ENCODE measurements at regions of chr1 and their contacts with region 1.

Region 1: GRCh38 chr1:100778748-100779147 is 59.2 kb downstream of the VCAM1 start:
- DNase-seq: no peak
- H3K4me3 ChIP-seq: no peak overlapping the region
- CTCF ChIP-seq: no peak

Region 2: DNA sequence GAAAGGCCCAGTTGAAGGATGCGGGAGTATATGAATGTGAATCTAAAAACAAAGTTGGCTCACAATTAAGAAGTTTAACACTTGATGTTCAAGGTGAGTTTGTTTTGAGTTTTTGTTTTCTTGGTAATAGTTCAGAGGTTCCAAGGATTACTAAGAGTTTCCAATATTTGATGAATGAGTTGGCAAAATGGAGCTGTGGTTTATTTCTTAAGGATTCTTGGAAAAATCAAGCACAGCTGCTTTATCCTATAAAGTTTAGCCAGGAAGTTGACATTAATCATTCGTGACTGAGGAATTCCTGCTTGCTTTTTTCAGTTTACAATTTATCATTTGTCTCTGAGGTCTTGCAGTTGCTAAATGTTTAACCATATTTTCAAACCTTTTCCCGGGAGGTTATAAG is 44.1 kb before region 1 on chr1:
- in situ Hi-C with region 1: no loop called
- DNase-seq: peak; percentile 51
- H3K4me3 ChIP-seq: no peak overlapping the region
- CTCF ChIP-seq: no peak

Region 3: GRCh38 chr1:100847361-100848082 is 68.8 kb after region 1 on chr1:
- in situ Hi-C with region 1: loop called (anchors 5 kb)
- DNase-seq: no peak
- H3K4me3 ChIP-seq: no peak overlapping the region
- CTCF ChIP-seq: no peak

Region 4: DNA sequence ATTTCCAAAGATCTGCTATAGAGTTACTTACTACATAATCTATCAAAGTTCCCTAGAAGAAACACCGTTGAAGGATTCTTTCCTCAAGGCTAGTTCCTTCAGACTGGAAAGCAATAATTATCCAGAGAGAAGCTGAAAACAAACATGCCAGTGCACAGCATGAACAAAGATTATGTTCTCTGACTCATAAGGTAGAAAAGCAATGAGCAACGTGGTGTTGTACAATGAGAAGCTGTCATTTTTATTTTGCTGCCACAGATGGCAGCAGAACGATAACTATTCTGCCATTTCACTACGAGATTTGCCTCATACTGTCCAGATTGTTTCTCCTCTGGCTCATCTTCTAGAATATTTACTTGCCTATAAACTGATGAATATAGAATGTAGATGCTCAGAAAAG is 105.2 kb after region 1 on chr1:
- in situ Hi-C with region 1: no loop called
- DNase-seq: peak; percentile 58
- H3K4me3 ChIP-seq: no peak overlapping the region
- CTCF ChIP-seq: peak; percentile 27